Posterior cingulate gyrus (tissue), 11 donors: ENCODE measurements at regions of chr9 and their contacts with region 1.

Region 1: DNA sequence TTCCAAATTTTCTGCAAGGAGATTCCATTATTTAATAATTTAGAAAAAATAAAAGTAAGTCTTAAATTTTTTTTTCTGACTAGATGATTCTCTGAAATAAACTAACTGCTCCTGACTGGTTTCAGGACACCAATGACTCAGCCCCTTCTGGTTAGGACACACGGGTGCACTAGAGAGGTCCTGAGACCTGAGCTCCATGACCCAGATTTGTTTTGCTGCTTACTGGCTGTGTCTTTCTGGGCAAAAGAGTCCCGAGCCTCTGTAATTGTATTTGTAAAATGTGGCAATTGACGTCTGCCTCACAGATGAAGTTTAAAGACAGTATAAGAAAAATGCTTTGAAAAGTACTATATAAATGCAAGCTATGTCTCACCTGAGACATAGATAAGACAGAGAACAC is 89.1 kb downstream of the SLC24A2 start:
- DNase-seq: no peak

Region 2: DNA sequence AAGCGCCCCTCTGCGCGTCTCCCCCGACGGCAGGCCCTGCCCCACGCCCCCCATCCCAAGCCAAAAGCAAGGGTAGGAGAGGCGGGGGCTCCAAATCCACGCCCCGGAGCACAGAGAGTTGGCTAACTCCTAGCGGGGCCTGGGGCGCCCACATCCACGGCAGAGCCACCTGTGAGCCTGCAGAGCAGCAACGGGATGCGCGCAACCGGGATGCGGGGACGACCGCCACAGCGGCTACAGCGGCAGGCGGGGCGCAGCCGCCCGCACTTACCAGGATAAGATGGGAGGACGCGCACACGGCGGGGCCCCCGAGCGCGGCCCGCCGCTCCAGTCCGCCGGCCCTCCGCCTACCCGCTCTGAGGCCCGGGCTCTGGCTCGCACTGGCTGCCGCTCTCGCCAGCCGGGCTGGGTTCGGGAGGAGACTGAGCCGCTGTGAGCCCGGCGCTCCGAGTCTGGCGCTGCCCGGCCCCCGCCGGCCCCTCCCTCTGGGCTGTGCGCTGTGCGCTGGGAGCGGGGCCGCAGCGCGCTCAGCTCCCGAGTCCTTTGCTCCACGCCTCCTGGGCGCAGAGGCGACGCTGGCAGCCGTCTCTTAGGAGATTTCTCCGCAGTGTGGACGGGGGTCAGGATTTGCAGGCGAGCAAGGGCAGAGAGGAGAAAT is 89.0 kb after region 1 on chr9 and contains the start of gene SLC24A2:
- intact Hi-C with region 1: loop called (anchors 5 kb)
- DNase-seq: peak; percentile 53 to 96 (median 71)